H1 (cell line): ENCODE measurements at regions of chr10 and their contacts with region 1.

Region 1: GRCh38 chr10:111756217-111757061 is 427.1 kb downstream of the GPAM start:
- DNase-seq: peak; percentile 44 to 60
- H3K4me3 ChIP-seq: no peak overlapping the region
- H3K27ac ChIP-seq: no peak overlapping the region
- H3K4me1 ChIP-seq: no peaks in the 10 kb centered on the region
- H3K27me3 ChIP-seq: peaks cover 0 to 3% (median 2%) of the 10 kb centered on the region in 4 experiments; a peak in 2 of 7 replicates
- CTCF ChIP-seq: peak; percentile 79 to 90 (median 80)
- EP300 ChIP-seq: no peak
- POLR2A ChIP-seq: no peak
- RAD21 ChIP-seq: peak; percentile 84 to 87

Region 2: DNA sequence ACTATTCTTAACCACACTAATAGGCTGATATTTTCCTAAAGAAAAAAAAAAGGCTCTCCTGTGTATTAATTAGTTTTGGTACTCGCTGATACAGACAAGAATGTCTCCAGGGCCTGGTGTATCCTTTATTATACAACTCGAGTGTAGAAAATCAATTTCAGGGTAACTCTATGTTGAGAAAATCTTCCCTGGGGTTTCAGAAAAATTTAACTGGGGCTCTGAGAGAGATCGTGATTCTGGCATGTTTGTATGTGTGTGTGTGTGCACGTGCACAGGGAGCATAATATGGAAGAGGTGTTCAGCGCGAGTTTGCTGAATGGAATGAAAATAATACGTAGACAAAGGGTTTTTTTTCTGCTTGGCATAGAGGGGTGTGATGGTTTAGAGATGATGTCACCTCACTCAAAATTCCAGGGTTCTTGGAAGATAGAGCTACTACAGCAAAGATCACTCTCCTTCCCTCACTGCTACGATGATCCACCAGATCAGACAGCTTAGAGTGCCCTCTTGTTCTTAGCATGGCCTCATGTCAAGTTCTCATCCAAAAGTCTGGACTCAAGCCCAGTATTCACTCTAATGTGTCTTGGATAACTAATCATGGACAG is 69.5 kb before region 1 on chr10:
- CTCF ChIA-PET with region 1: no interaction called
- POLR2A ChIA-PET with region 1: no interaction called
- DNase-seq: no peak
- H3K4me3 ChIP-seq: no peak overlapping the region
- H3K27ac ChIP-seq: no peak overlapping the region
- H3K4me1 ChIP-seq: no peaks in the 10 kb centered on the region
- H3K27me3 ChIP-seq: no peaks in the 10 kb centered on the region
- CTCF ChIP-seq: no peak
- EP300 ChIP-seq: no peak
- POLR2A ChIP-seq: no peak
- RAD21 ChIP-seq: no peak

Region 3: GRCh38 chr10:111745982-111746381 is 10.5 kb before region 1 on chr10:
- CTCF ChIA-PET with region 1: interaction called, 17 read pairs
- POLR2A ChIA-PET with region 1: no interaction called
- DNase-seq: no peak
- H3K4me3 ChIP-seq: no peak overlapping the region
- H3K27ac ChIP-seq: no peak overlapping the region
- H3K4me1 ChIP-seq: no peaks in the 10 kb centered on the region
- H3K27me3 ChIP-seq: no peaks in the 10 kb centered on the region
- CTCF ChIP-seq: no peak
- EP300 ChIP-seq: no peak
- POLR2A ChIP-seq: no peak
- RAD21 ChIP-seq: no peak

Region 4: DNA sequence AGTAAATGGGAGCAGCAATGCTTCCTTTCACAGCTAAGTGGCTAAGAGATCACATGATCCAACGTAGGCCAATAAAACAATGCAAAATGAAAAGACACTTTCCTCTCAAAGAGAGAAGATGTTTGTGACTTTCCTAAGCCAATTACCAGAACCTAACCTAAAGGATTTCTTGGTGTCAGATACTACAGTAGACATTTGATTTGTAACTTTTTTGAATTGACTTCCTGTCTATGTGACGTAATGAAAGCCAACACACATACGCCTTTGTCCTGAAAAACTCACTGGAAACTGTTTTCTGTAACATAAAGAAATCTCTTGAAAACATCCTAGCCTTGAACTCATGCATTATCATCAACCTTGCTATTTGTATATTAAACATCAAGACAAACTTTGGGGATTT is 10.0 kb after region 1 on chr10:
- CTCF ChIA-PET with region 1: interaction called, 11 read pairs
- POLR2A ChIA-PET with region 1: no interaction called
- DNase-seq: no peak
- H3K4me3 ChIP-seq: no peak overlapping the region
- H3K27ac ChIP-seq: no peak overlapping the region
- H3K4me1 ChIP-seq: peaks cover 0 to 7% (median 0%) of the 10 kb centered on the region in 4 experiments; a peak in 1 of 7 replicates
- H3K27me3 ChIP-seq: no peaks in the 10 kb centered on the region
- CTCF ChIP-seq: no peak
- EP300 ChIP-seq: no peak
- POLR2A ChIP-seq: no peak
- RAD21 ChIP-seq: no peak

Region 5: GRCh38 chr10:111774486-111774885 is 18.0 kb after region 1 on chr10:
- CTCF ChIA-PET with region 1: interaction called, 12 read pairs
- POLR2A ChIA-PET with region 1: no interaction called
- DNase-seq: no peak
- H3K4me3 ChIP-seq: no peak overlapping the region
- H3K27ac ChIP-seq: no peak overlapping the region
- H3K4me1 ChIP-seq: no peaks in the 10 kb centered on the region
- H3K27me3 ChIP-seq: no peaks in the 10 kb centered on the region
- CTCF ChIP-seq: no peak
- EP300 ChIP-seq: no peak
- POLR2A ChIP-seq: no peak
- RAD21 ChIP-seq: no peak

Region 6: DNA sequence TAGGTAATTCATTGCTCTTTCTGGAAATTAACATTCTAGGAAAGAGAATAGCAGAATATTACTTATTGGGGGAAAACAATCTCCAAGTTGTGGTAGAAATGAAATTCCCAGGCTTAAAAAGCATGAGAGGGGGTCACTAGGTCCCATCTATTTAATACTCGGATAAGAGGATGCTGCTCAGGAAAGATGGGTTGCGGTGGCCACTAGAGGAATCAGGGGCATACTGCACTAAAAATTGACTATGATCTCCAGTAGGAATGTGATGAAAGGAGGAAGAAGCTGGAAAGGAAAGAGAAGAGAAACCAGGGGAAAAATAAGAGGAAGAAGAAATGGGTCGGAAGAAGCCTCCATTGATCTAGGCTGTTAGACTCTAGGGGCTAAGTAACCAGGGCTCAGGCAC is 234.3 kb after region 1 on chr10:
- CTCF ChIA-PET with region 1: interaction called, 28 read pairs
- POLR2A ChIA-PET with region 1: no interaction called
- DNase-seq: no peak
- H3K4me3 ChIP-seq: no peak overlapping the region
- H3K27ac ChIP-seq: no peak overlapping the region
- H3K4me1 ChIP-seq: no peaks in the 10 kb centered on the region
- H3K27me3 ChIP-seq: no peaks in the 10 kb centered on the region
- CTCF ChIP-seq: peak in 2 of 3 experiments; percentile 37 to 57; a peak in 3 of 4 replicates
- EP300 ChIP-seq: no peak
- POLR2A ChIP-seq: no peak
- RAD21 ChIP-seq: peak; percentile 60 to 62